ENCODE measurements at regions of chr6 and their contacts with region 1.

Region 1: GRCh38 chr6:3258720-3259490 is at the start of gene PSMG4:
- DNase-seq: no peak
- H3K4me3 ChIP-seq: peak within 1 kb of the TSS; percentile 67 to 81
- H3K27ac ChIP-seq: peak within 1 kb of the TSS; percentile 77
- H3K4me1 ChIP-seq: peaks cover 44% of the 10 kb centered on the region
- H3K27me3 ChIP-seq: no peaks in the 10 kb centered on the region
- CTCF ChIP-seq: peak in 1 of 3 experiments; percentile 19
- POLR2A ChIP-seq: peak in 1 of 2 donors; percentile 26
- total RNA-seq, gene PSMG4: 25.0 TPM

Region 2: GRCh38 chr6:2831392-2831791 is 427.5 kb before region 1 on chr6:
- intact Hi-C with region 1: no loop called
- DNase-seq: no peak
- H3K4me3 ChIP-seq: no peak overlapping the region
- H3K27ac ChIP-seq: no peak overlapping the region
- H3K4me1 ChIP-seq: no peaks in the 10 kb centered on the region
- H3K27me3 ChIP-seq: no peaks in the 10 kb centered on the region
- CTCF ChIP-seq: no peak
- POLR2A ChIP-seq: no peak

Region 3: GRCh38 chr6:2940010-2940850 is 318.7 kb before region 1 on chr6:
- intact Hi-C with region 1: loop called (anchors 5 kb)
- DNase-seq: peak in 1 of 2 donors; percentile 58
- H3K4me3 ChIP-seq: no peak overlapping the region
- H3K27ac ChIP-seq: no peak overlapping the region
- H3K4me1 ChIP-seq: peaks cover 4% of the 10 kb centered on the region
- H3K27me3 ChIP-seq: no peaks in the 10 kb centered on the region
- CTCF ChIP-seq: no peak
- POLR2A ChIP-seq: no peak

Region 4: GRCh38 chr6:3013479-3013878 is 245.4 kb before region 1 on chr6:
- intact Hi-C with region 1: no loop called
- DNase-seq: no peak
- H3K4me3 ChIP-seq: no peak overlapping the region
- H3K27ac ChIP-seq: no peak overlapping the region
- H3K4me1 ChIP-seq: no peaks in the 10 kb centered on the region
- H3K27me3 ChIP-seq: no peaks in the 10 kb centered on the region
- CTCF ChIP-seq: no peak
- POLR2A ChIP-seq: no peak

Region 5: GRCh38 chr6:3124667-3125066 is 134.2 kb before region 1 on chr6:
- intact Hi-C with region 1: loop called (anchors 5 kb)
- DNase-seq: no peak
- H3K4me3 ChIP-seq: no peak overlapping the region
- H3K27ac ChIP-seq: no peak overlapping the region
- H3K4me1 ChIP-seq: peaks cover 1% of the 10 kb centered on the region
- H3K27me3 ChIP-seq: no peaks in the 10 kb centered on the region
- CTCF ChIP-seq: no peak
- POLR2A ChIP-seq: no peak

Region 6: DNA sequence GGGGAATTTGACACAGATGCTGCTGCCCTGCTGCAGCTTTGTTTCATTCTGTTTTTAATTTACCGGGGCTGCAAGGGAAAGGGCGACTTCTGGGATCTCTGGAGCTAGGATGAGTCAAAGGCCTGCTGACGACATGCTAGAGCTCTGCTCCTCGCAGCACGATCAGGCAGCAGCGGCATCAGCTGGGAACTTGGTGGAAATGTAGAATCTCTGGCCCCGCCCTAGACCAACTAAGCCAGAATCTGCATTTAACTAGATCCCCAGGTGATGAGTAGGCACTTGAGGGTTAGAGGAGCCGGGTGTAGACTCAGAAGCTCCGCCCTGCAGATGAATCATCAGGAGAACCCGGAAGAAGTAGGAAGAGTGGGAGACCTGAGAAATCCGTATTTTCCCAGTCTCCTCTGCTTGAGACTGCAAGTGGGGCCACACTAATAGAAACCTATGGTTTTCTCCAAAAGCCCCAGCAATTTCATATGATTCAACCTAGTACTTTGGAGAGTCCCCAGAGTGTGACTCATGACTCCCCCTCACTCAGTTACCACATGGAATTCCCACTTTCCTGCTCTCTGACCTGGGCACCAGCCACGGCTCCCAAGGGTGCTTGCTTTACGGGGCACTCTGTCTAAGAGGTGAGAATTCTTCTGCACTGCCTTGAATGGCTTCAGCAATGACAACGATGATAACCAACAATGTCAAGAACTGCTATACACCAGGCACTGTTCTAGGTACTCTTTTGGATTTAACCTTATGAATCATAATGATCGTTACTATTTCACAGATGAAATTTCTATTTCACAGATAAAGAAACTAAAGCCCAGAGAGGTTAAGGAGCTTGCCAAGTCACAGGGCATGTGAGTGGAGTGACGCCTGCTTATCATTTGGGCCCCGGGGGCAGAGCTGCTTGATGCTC is 49.5 kb before region 1 on chr6:
- intact Hi-C with region 1: no loop called
- DNase-seq: no peak
- H3K4me3 ChIP-seq: no peak overlapping the region
- H3K27ac ChIP-seq: peak overlapping the region; percentile 75
- H3K4me1 ChIP-seq: peaks cover 29% of the 10 kb centered on the region
- H3K27me3 ChIP-seq: no peaks in the 10 kb centered on the region
- CTCF ChIP-seq: no peak
- POLR2A ChIP-seq: no peak

Region 7: GRCh38 chr6:3561725-3562124 is 302.8 kb after region 1 on chr6:
- intact Hi-C with region 1: no loop called
- DNase-seq: no peak
- H3K4me3 ChIP-seq: no peak overlapping the region
- H3K27ac ChIP-seq: no peak overlapping the region
- H3K4me1 ChIP-seq: no peaks in the 10 kb centered on the region
- H3K27me3 ChIP-seq: no peaks in the 10 kb centered on the region
- CTCF ChIP-seq: no peak
- POLR2A ChIP-seq: no peak